B cell (primary cell): ENCODE measurements at regions of chr11 and their contacts with region 1.

Region 1: GRCh38 chr11:122697636-122698167 is 42.2 kb downstream of the UBASH3B start:
- DNase-seq: peak; percentile 71
- ATAC-seq: peak; percentile 90
- H3K4me3 ChIP-seq: peak overlapping the region in 4 of 5 experiments; percentile 3 to 34 (median 18)
- H3K4me3 Mint-ChIP-seq: peak overlapping the region; percentile 83
- H3K27ac ChIP-seq: peak overlapping the region; percentile 14 to 74
- H3K27ac Mint-ChIP-seq: peak overlapping the region; percentile 81
- H3K4me1 ChIP-seq: peaks cover 51 to 59% of the 10 kb centered on the region in 2 donors
- H3K4me1 Mint-ChIP-seq: peaks cover 60% of the 10 kb centered on the region
- H3K27me3 ChIP-seq: peaks cover 0 to under 1% (median 0%) of the 10 kb centered on the region in 4 experiments
- H3K27me3 Mint-ChIP-seq: no peaks in the 10 kb centered on the region
- CTCF ChIP-seq: no peak

Region 2: DNA sequence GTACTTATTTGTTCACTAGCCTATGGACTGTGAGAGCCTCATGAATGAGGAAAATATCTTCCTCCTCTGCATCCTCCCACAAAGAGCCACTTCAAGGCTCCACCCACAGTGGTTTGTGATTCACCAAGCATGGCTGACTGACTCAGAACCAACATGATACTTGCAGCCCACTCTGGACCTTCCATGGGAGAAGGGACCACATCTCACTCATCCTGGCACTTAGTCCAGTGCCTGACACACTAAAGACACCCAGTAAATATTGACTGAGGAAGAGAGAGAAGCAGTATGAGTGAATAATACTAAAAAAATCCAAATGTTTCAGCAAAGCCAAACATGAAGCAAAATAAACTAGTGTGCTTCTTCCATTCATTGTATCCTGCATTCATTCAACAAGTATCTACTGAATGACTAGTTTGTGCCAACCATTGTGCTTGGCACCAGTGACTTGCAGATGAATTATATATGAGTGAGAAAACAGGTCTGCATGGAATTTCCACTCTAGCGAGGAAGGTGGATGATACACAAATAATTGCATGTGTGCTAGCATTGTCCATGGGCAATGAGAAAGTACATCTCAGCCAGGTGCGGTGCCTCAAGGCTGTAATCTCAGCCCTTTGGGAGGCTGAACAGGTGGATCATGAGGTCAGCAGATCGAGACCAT is 526.8 kb before region 1 on chr11:
- CTCF ChIA-PET with region 1: no interaction called
- POLR2A ChIA-PET with region 1: no interaction called
- intact Hi-C with region 1: no loop called
- DNase-seq: no peak
- ATAC-seq: no peak
- H3K4me3 ChIP-seq: no peak overlapping the region
- H3K4me3 Mint-ChIP-seq: no peak overlapping the region
- H3K27ac ChIP-seq: no peak overlapping the region
- H3K27ac Mint-ChIP-seq: no peak overlapping the region
- H3K4me1 ChIP-seq: no peaks in the 10 kb centered on the region
- H3K4me1 Mint-ChIP-seq: no peaks in the 10 kb centered on the region
- H3K27me3 ChIP-seq: no peaks in the 10 kb centered on the region
- H3K27me3 Mint-ChIP-seq: peaks cover 7% of the 10 kb centered on the region
- CTCF ChIP-seq: no peak

Region 3: DNA sequence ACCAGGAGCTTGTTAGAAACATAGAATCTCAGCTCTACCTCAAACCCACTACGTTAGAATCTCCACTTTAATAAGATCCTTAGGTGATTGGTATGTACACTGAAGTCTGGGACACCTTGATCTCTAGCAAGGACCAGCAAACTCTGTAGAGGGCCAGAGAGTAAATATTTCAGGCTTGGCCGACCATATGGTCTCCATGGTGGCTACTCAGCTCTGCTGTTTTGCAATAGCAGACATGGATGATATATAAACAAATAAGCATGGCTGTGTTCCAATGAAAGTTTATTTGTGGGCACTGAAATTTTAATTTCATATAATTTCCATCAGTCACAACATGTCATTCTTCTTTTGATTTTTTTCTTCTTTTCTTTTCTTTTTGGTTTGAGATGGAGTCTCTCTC is 18.2 kb before region 1 on chr11:
- CTCF ChIA-PET with region 1: no interaction called
- POLR2A ChIA-PET with region 1: no interaction called
- intact Hi-C with region 1: no loop called
- DNase-seq: no peak
- ATAC-seq: no peak
- H3K4me3 ChIP-seq: no peak overlapping the region
- H3K4me3 Mint-ChIP-seq: no peak overlapping the region
- H3K27ac ChIP-seq: no peak overlapping the region
- H3K27ac Mint-ChIP-seq: no peak overlapping the region
- H3K4me1 ChIP-seq: peaks cover 11 to 12% of the 10 kb centered on the region in 2 donors
- H3K4me1 Mint-ChIP-seq: peaks cover 14% of the 10 kb centered on the region
- H3K27me3 ChIP-seq: no peaks in the 10 kb centered on the region
- H3K27me3 Mint-ChIP-seq: no peaks in the 10 kb centered on the region
- CTCF ChIP-seq: no peak

Region 4: GRCh38 chr11:122711831-122712381 is 14.2 kb after region 1 on chr11:
- CTCF ChIA-PET with region 1: interaction called, 3 read pairs
- POLR2A ChIA-PET with region 1: interaction called, 4 read pairs
- intact Hi-C with region 1: loop called (anchors 1 kb)
- DNase-seq: no peak
- ATAC-seq: no peak
- H3K4me3 ChIP-seq: no peak overlapping the region
- H3K4me3 Mint-ChIP-seq: no peak overlapping the region
- H3K27ac ChIP-seq: no peak overlapping the region
- H3K27ac Mint-ChIP-seq: peak overlapping the region; percentile 26
- H3K4me1 ChIP-seq: peaks cover 52 to 60% of the 10 kb centered on the region in 2 donors
- H3K4me1 Mint-ChIP-seq: peaks cover 58% of the 10 kb centered on the region
- H3K27me3 ChIP-seq: no peaks in the 10 kb centered on the region
- H3K27me3 Mint-ChIP-seq: no peaks in the 10 kb centered on the region
- CTCF ChIP-seq: no peak

Region 5: GRCh38 chr11:122832721-122833470 is 135.2 kb after region 1 on chr11:
- CTCF ChIA-PET with region 1: no interaction called
- POLR2A ChIA-PET with region 1: no interaction called
- intact Hi-C with region 1: no loop called
- DNase-seq: peak; percentile 51
- ATAC-seq: peak; percentile 33
- H3K4me3 ChIP-seq: no peak overlapping the region
- H3K4me3 Mint-ChIP-seq: peak overlapping the region; percentile 33
- H3K27ac ChIP-seq: no peak overlapping the region
- H3K27ac Mint-ChIP-seq: no peak overlapping the region
- H3K4me1 ChIP-seq: peaks cover 15 to 24% of the 10 kb centered on the region in 2 donors
- H3K4me1 Mint-ChIP-seq: peaks cover 20% of the 10 kb centered on the region
- H3K27me3 ChIP-seq: peaks cover 0 to 28% (median 1%) of the 10 kb centered on the region in 4 experiments
- H3K27me3 Mint-ChIP-seq: peaks cover 14% of the 10 kb centered on the region
- CTCF ChIP-seq: no peak